Activated CD4-positive, alpha-beta T cell treated with anti-CD3 and anti-CD28 coated beads, Interleukin-2, amount 10 ng/mL, durations not matched to agents 7 days and 5 days (primary cell): ENCODE measurements at regions of chr15 and their contacts with region 1.

Region 1: DNA sequence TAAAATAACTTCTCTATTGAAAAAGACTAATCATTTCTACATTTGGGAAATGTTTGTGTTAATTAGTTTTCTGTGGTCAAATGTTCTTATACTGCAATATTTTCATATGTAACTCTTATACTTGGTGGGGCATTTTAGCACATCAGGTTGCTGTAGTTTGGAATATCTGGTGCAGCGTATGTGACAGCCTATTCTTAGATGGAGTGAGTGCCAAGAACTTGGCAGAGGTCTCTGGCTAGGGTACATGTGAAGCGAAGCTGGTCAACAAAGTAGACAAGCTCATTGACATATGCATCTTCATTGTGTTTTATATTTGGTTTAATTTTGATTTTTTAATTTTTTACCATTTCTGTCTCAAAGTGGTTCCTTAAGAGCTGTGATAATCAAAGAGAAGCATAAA is 53.2 kb downstream of the CHAC1 start:
- DNase-seq: no peak
- H3K4me3 Mint-ChIP-seq: no peak overlapping the region
- H3K27ac Mint-ChIP-seq: no peak overlapping the region
- H3K4me1 Mint-ChIP-seq: no peaks in the 10 kb centered on the region
- H3K27me3 Mint-ChIP-seq: no peaks in the 10 kb centered on the region

Region 2: GRCh38 chr15:39299486-39300267 is 1706.8 kb before region 1 on chr15:
- CTCF ChIA-PET with region 1: no interaction called
- POLR2A ChIA-PET with region 1: interaction called, 11 read pairs
- DNase-seq: no peak
- H3K4me3 Mint-ChIP-seq: no peak overlapping the region
- H3K27ac Mint-ChIP-seq: no peak overlapping the region
- H3K4me1 Mint-ChIP-seq: no peaks in the 10 kb centered on the region
- H3K27me3 Mint-ChIP-seq: peaks cover 28% of the 10 kb centered on the region

Region 3: DNA sequence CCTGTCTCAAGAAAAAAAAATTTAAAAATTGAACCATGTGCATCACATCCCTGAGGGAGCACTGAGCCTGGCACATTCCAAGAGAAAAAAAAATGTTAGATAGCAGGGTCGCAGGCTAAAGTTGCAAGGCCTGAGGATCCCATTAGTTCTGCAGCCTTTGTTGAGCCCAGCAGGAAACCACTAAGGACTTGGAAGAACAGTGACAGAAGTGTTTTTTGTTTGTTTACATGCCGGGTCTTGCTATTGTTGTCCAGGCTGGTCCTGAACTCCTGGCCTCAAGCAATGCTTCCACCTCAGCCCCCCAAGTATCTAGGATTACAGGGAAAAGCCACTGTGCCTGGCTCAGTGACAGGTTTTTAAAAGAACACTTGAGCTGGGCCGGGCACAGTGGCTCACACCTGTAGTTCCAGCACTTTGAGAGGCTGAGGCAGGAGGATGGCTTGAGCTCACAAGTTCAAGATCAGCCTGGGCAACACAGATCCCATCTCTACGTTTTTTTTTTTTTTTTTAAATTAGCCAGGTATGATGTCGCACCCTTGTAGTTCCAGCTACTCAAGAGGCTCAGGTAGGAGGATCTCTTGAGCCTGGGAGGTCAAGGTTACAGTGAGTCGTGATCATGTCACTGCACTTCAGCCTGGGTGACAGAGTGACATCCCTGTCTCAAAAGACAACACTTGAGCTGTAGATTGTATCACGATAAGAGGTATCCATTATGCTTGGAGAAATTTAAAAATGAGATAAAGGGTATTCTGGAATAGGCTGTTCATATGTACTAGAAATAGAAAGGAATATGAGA is 38.0 kb before region 1 on chr15:
- CTCF ChIA-PET with region 1: no interaction called
- POLR2A ChIA-PET with region 1: no interaction called
- DNase-seq: no peak
- H3K4me3 Mint-ChIP-seq: no peak overlapping the region
- H3K27ac Mint-ChIP-seq: no peak overlapping the region
- H3K4me1 Mint-ChIP-seq: peaks cover 4% of the 10 kb centered on the region
- H3K27me3 Mint-ChIP-seq: peaks cover 2% of the 10 kb centered on the region